Heart right ventricle (tissue), 16 donors: ENCODE measurements at regions of chr2 and their contacts with region 1.

Region 1: DNA sequence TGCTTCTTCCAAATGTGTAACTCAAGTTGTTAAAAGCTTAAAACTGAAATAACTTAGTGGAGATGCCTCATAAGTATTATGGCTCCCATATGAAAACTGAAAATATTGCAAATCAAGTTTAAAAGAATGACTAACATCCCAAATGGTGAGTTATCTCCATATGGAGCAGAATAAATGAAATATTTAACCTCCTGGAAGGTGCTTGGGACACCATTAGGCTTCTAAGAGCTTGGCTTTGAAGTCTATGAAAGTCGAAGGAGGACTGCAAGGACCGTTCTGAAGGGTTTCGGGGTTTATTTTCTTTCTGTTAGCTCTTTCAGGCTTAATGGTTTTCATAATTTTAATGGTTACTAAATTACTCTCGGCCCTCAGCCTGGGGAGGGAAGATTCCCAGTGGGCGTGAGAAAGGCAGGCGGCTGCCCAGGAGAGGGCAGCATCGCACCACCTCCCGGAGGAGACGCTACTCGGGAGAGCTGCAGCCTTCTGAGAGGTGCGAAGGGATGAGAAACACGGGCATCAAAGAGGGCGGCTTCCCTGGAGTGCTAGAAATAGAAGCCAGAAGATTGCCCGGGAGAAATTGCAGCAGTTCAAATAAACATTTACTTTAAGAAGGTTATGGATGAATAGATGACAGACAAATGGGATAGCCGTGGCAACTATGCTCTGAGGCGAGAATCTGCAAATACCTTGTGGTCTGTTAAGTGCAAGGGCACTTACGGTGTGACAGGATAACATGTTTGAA is 43.1 kb downstream of the MAP3K19 start:
- DNase-seq: peak; percentile 65 to 74
- ATAC-seq: peak; percentile 91 to 100 (median 95)
- H3K4me3 ChIP-seq: no peak overlapping the region
- H3K27ac ChIP-seq: no peak overlapping the region
- H3K4me1 ChIP-seq: peaks cover 0 to 7% (median 0%) of the 10 kb centered on the region in 9 donors
- H3K27me3 ChIP-seq: peaks cover 0 to 33% (median 23%) of the 10 kb centered on the region in 7 donors
- CTCF ChIP-seq: peak; percentile 82 to 96 (median 91)

Region 2: GRCh38 chr2:134836986-134837385 is 167.2 kb before region 1 on chr2:
- intact Hi-C with region 1: no loop called
- DNase-seq: no peak
- ATAC-seq: no peak
- H3K4me3 ChIP-seq: no peak overlapping the region
- H3K27ac ChIP-seq: no peak overlapping the region
- H3K4me1 ChIP-seq: no peaks in the 10 kb centered on the region
- H3K27me3 ChIP-seq: peaks cover 0 to 5% (median 0%) of the 10 kb centered on the region in 7 donors
- CTCF ChIP-seq: no peak

Region 3: GRCh38 chr2:134897932-134898331 is 106.2 kb before region 1 on chr2:
- intact Hi-C with region 1: no loop called
- DNase-seq: no peak
- ATAC-seq: no peak
- H3K4me3 ChIP-seq: no peak overlapping the region
- H3K27ac ChIP-seq: no peak overlapping the region
- H3K4me1 ChIP-seq: no peaks in the 10 kb centered on the region
- H3K27me3 ChIP-seq: no peaks in the 10 kb centered on the region
- CTCF ChIP-seq: peak in 8 of 9 donors; percentile 14 to 71 (median 55)

Region 4: GRCh38 chr2:135585586-135585985 is 581.4 kb after region 1 on chr2:
- intact Hi-C with region 1: loop called in 1 of 10 experiments (anchors 10 kb)
- DNase-seq: no peak
- ATAC-seq: no peak
- H3K4me3 ChIP-seq: no peak overlapping the region
- H3K27ac ChIP-seq: no peak overlapping the region
- H3K4me1 ChIP-seq: peaks cover 0 to 11% (median 0%) of the 10 kb centered on the region in 9 donors
- H3K27me3 ChIP-seq: no peaks in the 10 kb centered on the region
- CTCF ChIP-seq: peak in 1 of 9 donors; percentile 32

Region 5: GRCh38 chr2:135799738-135800137 is 795.6 kb after region 1 on chr2:
- intact Hi-C with region 1: loop called in 1 of 10 experiments (anchors 10 kb)
- DNase-seq: no peak
- ATAC-seq: no peak
- H3K4me3 ChIP-seq: no peak overlapping the region
- H3K27ac ChIP-seq: no peak overlapping the region
- H3K4me1 ChIP-seq: peaks cover 0 to 15% (median 5%) of the 10 kb centered on the region in 9 donors
- H3K27me3 ChIP-seq: no peaks in the 10 kb centered on the region
- CTCF ChIP-seq: no peak